Right cardiac atrium (tissue), 5 donors: ENCODE measurements at regions of chr20 and their contacts with region 1.

Region 1: DNA sequence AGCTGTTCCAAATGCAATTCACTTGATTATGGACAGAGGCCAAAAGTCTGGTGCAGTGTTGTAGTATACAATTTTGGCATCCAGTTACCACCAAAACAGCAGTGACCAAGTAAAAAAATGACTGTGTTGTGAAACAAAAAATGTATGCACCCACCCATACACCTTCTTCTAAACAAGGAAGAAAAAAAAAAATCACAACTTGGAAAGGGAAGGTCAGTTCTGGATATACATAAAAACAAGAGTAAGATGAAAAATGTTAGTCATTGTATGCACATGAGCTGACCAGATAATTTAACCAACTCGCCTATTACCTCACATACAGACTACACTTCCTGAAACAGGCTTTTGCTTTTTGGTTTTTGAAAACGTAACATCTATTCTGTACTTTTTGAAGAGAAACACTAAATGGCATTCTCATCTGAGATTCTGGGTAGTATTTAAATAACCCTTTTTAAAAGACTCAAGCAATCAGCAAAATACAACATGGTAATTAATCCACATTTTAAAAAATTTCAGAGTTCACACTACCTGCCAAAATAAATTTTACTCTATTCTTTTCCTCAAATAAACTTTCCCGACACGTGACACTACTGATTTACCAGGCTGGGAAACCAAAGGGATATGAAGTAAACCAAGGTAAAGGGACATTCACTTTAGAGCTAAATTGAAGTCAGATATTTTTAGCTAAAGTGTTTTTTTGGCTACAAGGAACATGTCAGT is 141.6 kb upstream of the SHLD1 start:
- DNase-seq: no peak
- ATAC-seq: no peak
- H3K4me3 ChIP-seq: peak overlapping the region; percentile 85
- H3K27ac ChIP-seq: peak overlapping the region; percentile 43
- H3K4me1 ChIP-seq: peaks cover 5% of the 10 kb centered on the region
- H3K27me3 ChIP-seq: no peaks in the 10 kb centered on the region

Region 2: DNA sequence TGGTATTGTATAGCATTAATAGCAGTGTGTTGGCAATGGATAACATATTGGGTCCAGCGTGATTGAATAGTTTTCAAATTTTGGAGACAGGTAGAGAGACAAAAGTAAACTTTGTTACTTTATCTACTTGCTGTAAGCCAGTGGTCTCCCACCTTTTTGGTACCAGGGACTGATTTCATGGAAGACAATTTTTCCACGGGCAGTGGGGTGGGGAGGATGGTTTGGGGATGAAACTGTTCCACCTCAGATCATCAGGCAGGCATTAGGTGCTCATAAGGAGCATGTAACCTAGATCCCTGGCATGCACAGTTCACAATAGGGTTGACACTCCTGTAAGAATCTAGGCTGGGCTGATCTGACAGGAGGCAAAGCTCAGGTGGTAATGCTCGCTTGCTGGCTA is 277.3 kb before region 1 on chr20:
- intact Hi-C with region 1: no loop called
- DNase-seq: no peak
- ATAC-seq: no peak
- H3K4me3 ChIP-seq: no peak overlapping the region
- H3K27ac ChIP-seq: no peak overlapping the region
- H3K4me1 ChIP-seq: no peaks in the 10 kb centered on the region
- H3K27me3 ChIP-seq: no peaks in the 10 kb centered on the region

Region 3: DNA sequence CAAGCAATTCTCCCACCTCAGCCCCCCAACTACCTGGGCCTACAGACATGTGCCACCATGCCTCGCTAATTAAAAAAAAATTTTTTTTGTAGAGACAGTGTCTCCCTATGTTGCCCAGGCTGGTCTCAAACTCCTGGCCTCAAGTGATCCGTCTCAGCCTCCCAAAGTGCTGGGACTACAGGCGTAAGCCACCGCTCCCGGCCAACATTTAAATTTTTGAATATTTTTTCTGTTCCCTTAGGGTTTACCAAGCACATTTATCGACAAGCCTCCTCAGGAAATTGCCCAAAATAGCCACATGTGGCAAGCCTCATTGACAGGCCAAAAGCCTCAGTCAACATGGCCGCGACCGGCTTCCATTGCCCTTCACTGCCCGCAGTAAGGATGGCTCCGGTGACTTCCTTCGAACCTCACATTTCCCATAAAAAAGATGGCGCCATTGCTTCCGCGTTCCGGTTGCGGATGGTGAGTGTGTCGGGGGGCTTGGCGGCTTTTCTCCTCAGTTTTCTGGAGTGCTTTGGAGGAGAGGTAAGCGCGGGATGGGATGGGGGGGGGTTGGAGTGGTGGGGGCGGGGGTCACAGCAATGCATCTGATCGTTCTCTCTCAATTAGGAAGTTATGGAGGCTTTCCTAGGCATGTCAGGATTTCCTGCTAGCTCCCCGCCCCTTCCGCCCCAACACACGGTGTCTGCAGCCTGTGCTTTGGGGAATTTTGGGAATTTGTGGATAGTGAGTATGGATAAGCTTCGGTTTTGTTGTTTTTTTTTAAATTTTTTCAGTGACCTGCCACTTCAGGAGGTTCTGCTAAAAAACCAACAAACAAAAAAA is 141.6 kb after region 1 on chr20 and contains the start of gene SHLD1:
- intact Hi-C with region 1: loop called in 2 of 4 experiments (anchors 10 kb)
- DNase-seq: peak; percentile 85 to 93 (median 92)
- ATAC-seq: peak; percentile 97 to 98
- H3K4me3 ChIP-seq: peak within 1 kb of the TSS; percentile 97
- H3K27ac ChIP-seq: peak within 1 kb of the TSS; percentile 93
- H3K4me1 ChIP-seq: no peaks in the 10 kb centered on the region
- H3K27me3 ChIP-seq: no peaks in the 10 kb centered on the region
- total RNA-seq, gene SHLD1: 8.4 to 13.6 (median 11.9) TPM